Esophagus squamous epithelium (tissue), 5 donors: ENCODE measurements at regions of chr16 and their contacts with region 1.

Region 1: GRCh38 chr16:21158208-21159110 is at the start of gene LDAF1:
- DNase-seq: peak; percentile 11
- H3K4me3 ChIP-seq: peak within 1 kb of the TSS; percentile 64 to 94 (median 82)
- H3K27ac ChIP-seq: peak within 1 kb of the TSS; percentile 90 to 95 (median 94)
- H3K4me1 ChIP-seq: peaks cover 12 to 63% (median 44%) of the 10 kb centered on the region in 3 donors
- H3K27me3 ChIP-seq: no peaks in the 10 kb centered on the region
- CTCF ChIP-seq: no peak
- POLR2A ChIP-seq: peak in 2 of 4 donors; percentile 40 to 70
- total RNA-seq, gene LDAF1: 46.3 to 137 (median 111) TPM

Region 2: GRCh38 chr16:20735490-20735889 is 423.0 kb before region 1 on chr16:
- intact Hi-C with region 1: no loop called
- DNase-seq: no peak
- H3K4me3 ChIP-seq: no peak overlapping the region
- H3K27ac ChIP-seq: no peak overlapping the region
- H3K4me1 ChIP-seq: peaks cover 13 to 23% (median 13%) of the 10 kb centered on the region in 3 donors
- H3K27me3 ChIP-seq: no peaks in the 10 kb centered on the region
- CTCF ChIP-seq: no peak
- POLR2A ChIP-seq: no peak

Region 3: DNA sequence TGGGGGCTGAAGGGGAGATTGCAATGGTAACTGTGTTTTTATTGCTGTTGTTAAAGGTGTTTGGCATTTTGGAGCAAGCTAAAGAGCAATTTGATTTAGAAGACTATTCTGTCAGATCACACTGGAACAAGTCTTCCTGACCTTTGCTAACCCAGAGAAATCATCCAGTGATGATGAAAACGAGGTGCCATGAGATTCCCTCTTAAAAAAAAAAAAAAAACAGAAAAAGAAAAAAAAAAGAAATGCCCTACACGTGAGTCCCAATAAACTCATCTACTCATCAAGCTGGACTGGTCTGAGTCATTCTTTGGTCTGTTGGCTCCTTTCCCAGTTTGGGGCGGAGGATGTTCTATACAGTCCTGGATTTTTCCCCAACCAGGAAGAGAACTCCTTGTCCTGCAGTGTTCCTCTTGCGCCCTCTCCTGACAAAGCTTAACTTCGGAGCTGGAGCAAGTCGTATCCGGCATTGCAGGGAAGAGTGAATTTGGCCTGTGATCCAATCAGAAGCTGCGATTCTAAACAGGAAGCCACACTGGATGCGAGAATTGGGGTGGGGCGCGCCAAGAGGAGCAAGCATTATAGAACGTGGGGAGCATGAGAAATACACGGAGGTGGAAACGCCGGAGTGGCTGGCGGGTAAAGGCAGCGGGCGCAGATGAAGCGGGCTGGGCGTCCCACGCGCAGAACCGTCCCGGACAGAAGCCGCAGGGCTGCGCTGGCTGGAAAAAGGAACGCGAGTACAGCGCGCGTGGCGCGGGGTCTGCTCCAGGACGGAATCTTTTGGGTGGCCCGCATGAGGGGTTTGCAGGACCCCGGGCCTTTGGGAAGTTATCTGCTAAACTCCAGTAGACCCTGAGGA is 142.1 kb after region 1 on chr16:
- intact Hi-C with region 1: loop called (anchors 2 kb)
- DNase-seq: peak; percentile 51
- H3K4me3 ChIP-seq: peak overlapping the region; percentile 64 to 86 (median 76)
- H3K27ac ChIP-seq: peak overlapping the region; percentile 90 to 96 (median 91)
- H3K4me1 ChIP-seq: peaks cover 5 to 34% (median 13%) of the 10 kb centered on the region in 3 donors
- H3K27me3 ChIP-seq: peaks cover 0 to 3% (median 0%) of the 10 kb centered on the region in 4 donors
- CTCF ChIP-seq: peak; percentile 67 to 91 (median 82)
- POLR2A ChIP-seq: peak in 3 of 4 donors; percentile 41 to 66 (median 63)